Heart right ventricle (tissue), 16 donors: ENCODE measurements at regions of chr10 and their contacts with region 1.

Region 1: GRCh38 chr10:59354434-59354833 is 7.9 kb downstream of the FAM13C start:
- DNase-seq: no peak
- ATAC-seq: no peak
- H3K4me3 ChIP-seq: no peak overlapping the region
- H3K27ac ChIP-seq: no peak overlapping the region
- H3K4me1 ChIP-seq: peaks cover 0 to 23% (median 4%) of the 10 kb centered on the region in 9 donors
- H3K27me3 ChIP-seq: no peaks in the 10 kb centered on the region
- CTCF ChIP-seq: no peak

Region 2: GRCh38 chr10:59265141-59265540 is 89.3 kb before region 1 on chr10:
- intact Hi-C with region 1: loop called in 1 of 10 experiments (anchors 10 kb)
- DNase-seq: no peak
- ATAC-seq: no peak
- H3K4me3 ChIP-seq: no peak overlapping the region
- H3K27ac ChIP-seq: no peak overlapping the region
- H3K4me1 ChIP-seq: peaks cover 0 to 15% (median 0%) of the 10 kb centered on the region in 9 donors
- H3K27me3 ChIP-seq: no peaks in the 10 kb centered on the region
- CTCF ChIP-seq: no peak